Activated CD4-positive, alpha-beta T cell treated with anti-CD3 and anti-CD28 coated beads, Interleukin-2, amount 10 ng/mL, durations not matched to agents 24 days and 14 days (primary cell): ENCODE measurements at regions of chr3 and their contacts with region 1.

Region 1: DNA sequence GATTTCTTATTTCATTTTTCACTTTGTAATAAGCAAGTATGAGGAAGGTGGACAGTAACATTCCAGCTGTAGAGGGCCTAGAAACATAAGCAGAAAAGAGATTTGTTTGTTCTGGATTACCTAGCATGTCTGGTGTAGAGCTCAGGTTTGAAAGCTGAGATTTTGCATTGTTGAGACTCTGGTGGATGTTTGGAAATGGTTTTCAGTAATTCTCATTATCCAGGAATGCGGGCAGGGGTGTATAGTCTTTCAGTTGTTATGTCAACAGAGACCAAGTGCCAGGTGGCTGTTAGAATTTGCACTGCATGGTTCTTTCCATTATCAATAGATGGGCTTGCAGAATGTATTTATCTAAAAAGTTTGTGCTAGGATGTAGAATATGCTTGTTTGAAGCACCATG is 10.9 kb downstream of the GPD1L start:
- DNase-seq: no peak
- H3K4me3 Mint-ChIP-seq: no peak overlapping the region
- H3K27ac Mint-ChIP-seq: no peak overlapping the region
- H3K4me1 Mint-ChIP-seq: peaks cover 32% of the 10 kb centered on the region
- H3K27me3 Mint-ChIP-seq: no peaks in the 10 kb centered on the region

Region 2: GRCh38 chr3:31918179-31919168 is 198.8 kb before region 1 on chr3:
- intact Hi-C with region 1: loop called (anchors 5 kb)
- DNase-seq: peak; percentile 71
- H3K4me3 Mint-ChIP-seq: peak overlapping the region; percentile 64
- H3K27ac Mint-ChIP-seq: peak overlapping the region; percentile 87
- H3K4me1 Mint-ChIP-seq: peaks cover 35% of the 10 kb centered on the region
- H3K27me3 Mint-ChIP-seq: no peaks in the 10 kb centered on the region

Region 3: DNA sequence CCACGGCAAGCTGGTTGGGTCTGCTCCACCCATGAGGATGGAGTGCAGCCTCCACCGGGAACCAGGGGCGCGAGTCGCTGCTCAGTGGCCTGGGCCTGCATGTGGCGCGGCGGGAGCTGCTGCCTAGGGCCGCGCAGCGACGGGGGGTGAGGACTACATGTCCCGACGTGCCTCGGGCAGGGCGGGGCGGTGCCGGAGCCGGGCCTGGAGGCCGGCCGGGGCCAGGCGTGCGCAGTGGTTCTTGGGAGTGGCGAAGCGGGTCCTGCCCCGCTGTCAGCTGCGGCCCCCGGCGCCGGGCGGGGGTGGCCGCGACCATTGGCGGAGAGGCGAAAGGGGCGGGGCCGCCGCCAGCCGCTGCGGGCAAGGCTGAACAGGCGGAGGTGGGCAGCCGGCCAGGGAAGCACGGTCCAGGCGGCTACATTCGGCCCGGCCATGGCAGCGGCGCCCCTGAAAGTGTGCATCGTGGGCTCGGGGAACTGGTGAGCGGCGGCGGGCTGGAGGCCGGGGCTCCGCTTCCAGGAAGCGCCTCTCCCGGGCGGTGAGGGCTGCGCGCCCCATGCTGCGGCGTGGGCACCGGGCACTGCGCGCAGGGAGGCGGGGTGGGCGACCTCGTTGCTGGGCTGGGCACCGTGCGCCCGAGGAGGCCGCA is 10.9 kb before region 1 on chr3 and contains the start of gene GPD1L:
- intact Hi-C with region 1: loop called (anchors 1 kb)
- DNase-seq: peak; percentile 98
- H3K4me3 Mint-ChIP-seq: peak within 1 kb of the TSS; percentile 94
- H3K27ac Mint-ChIP-seq: peak within 1 kb of the TSS; percentile 90
- H3K4me1 Mint-ChIP-seq: peaks cover 32% of the 10 kb centered on the region
- H3K27me3 Mint-ChIP-seq: no peaks in the 10 kb centered on the region
- total RNA-seq, gene GPD1L: 19.0 and 20.0 TPM in 2 replicates

Region 4: DNA sequence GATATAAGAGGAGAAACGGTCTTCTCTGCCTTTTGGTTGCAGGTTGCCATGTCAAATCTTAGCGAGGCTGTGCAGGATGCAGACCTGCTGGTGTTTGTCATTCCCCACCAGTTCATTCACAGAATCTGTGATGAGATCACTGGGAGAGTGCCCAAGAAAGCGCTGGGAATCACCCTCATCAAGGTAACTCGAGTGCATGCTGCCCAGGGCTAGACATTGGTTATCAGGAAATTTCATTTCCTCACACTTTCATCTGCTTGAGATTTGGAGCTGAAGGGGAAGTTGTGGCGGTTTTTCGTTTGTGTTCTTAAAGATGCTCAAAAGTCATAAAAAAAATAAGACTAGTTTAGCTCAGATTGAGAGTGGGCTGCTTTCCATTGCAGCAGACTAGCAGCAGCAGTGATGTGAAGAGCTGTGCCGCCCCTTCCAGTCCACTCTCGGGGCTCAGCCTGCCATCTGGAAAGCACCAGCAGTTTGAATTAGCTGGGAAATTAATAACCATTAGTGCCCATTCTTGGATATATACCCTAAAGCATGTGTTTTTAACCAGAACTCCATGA is 21.3 kb after region 1 on chr3:
- intact Hi-C with region 1: loop called (anchors 2 kb)
- DNase-seq: peak; percentile 61
- H3K4me3 Mint-ChIP-seq: no peak overlapping the region
- H3K27ac Mint-ChIP-seq: no peak overlapping the region
- H3K4me1 Mint-ChIP-seq: peaks cover 20% of the 10 kb centered on the region
- H3K27me3 Mint-ChIP-seq: no peaks in the 10 kb centered on the region

Region 5: GRCh38 chr3:32216172-32216783 is 99.0 kb after region 1 on chr3:
- intact Hi-C with region 1: no loop called
- DNase-seq: no peak
- H3K4me3 Mint-ChIP-seq: no peak overlapping the region
- H3K27ac Mint-ChIP-seq: no peak overlapping the region
- H3K4me1 Mint-ChIP-seq: no peaks in the 10 kb centered on the region
- H3K27me3 Mint-ChIP-seq: peaks cover 13% of the 10 kb centered on the region

Region 6: GRCh38 chr3:32684800-32685542 is 567.6 kb after region 1 on chr3 and contains the start of gene CNOT10:
- intact Hi-C with region 1: loop called (anchors 10 kb)
- DNase-seq: peak; percentile 99
- H3K4me3 Mint-ChIP-seq: peak within 1 kb of the TSS; percentile 95
- H3K27ac Mint-ChIP-seq: peak within 1 kb of the TSS; percentile 96
- H3K4me1 Mint-ChIP-seq: peaks cover 27% of the 10 kb centered on the region
- H3K27me3 Mint-ChIP-seq: no peaks in the 10 kb centered on the region
- total RNA-seq, gene CNOT10: 61.0 and 74.4 TPM in 2 replicates